Heart left ventricle (tissue), 16 donors: ENCODE measurements at regions of chr20 and their contacts with region 1.

Region 1: GRCh38 chr20:16801919-16802911 is 54.1 kb downstream of the OTOR start:
- DNase-seq: peak in 3 of 5 donors; percentile 12 to 36 (median 30)
- ATAC-seq: peak in 1 of 4 donors; percentile 49
- H3K4me3 ChIP-seq: no peak overlapping the region
- H3K27ac ChIP-seq: no peak overlapping the region
- H3K4me1 ChIP-seq: no peaks in the 10 kb centered on the region
- H3K27me3 ChIP-seq: peaks cover 0 to 79% (median 10%) of the 10 kb centered on the region in 9 donors
- CTCF ChIP-seq: peak; percentile 71 to 87 (median 78)
- POLR2A ChIP-seq: no peak

Region 2: GRCh38 chr20:16573001-16573965 is 228.9 kb before region 1 on chr20 and contains the start of gene KIF16B:
- intact Hi-C with region 1: no loop called
- DNase-seq: peak; percentile 92 to 96 (median 93)
- ATAC-seq: peak; percentile 89 to 98 (median 96)
- H3K4me3 ChIP-seq: peak within 1 kb of the TSS; percentile 63 to 99 (median 89)
- H3K27ac ChIP-seq: peak within 1 kb of the TSS in 11 of 12 donors; percentile 53 to 86 (median 78)
- H3K4me1 ChIP-seq: peaks cover 0 to 36% (median 22%) of the 10 kb centered on the region in 12 donors
- H3K27me3 ChIP-seq: no peaks in the 10 kb centered on the region
- CTCF ChIP-seq: peak in 2 of 12 donors; percentile 1 to 16
- POLR2A ChIP-seq: no peak
- total RNA-seq, gene KIF16B: 12.6 to 31.8 (median 17.8) TPM

Region 3: DNA sequence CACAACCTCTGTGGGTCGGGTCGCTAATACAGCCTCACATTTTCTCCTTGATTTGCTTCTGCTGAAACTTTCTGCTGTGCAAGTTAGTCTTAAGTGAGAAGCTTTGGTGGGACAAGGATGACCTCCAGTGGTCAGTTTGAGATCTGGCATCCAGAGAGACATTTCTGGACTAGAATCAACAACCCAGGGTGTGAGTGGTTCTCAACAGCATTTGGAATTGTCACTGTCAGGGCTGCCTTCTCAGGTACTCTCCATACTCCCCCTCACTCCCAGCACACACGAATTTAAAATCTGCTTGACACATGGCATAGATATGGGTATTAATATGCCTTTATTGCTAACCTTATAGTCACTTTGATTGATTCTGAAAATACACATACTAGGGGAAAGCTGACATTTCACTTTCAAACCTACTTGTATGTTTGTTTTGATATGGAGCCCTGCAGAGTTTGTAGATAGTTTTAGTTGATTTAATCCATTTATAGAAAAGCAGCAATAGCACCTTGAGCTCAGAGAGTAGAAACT is 40.8 kb before region 1 on chr20:
- intact Hi-C with region 1: no loop called
- DNase-seq: peak in 4 of 5 donors; percentile 26 to 38 (median 26)
- ATAC-seq: peak in 3 of 4 donors; percentile 76 to 78 (median 78)
- H3K4me3 ChIP-seq: no peak overlapping the region
- H3K27ac ChIP-seq: no peak overlapping the region
- H3K4me1 ChIP-seq: peaks cover 0 to 5% (median 0%) of the 10 kb centered on the region in 12 donors
- H3K27me3 ChIP-seq: peaks cover 0 to 14% (median 2%) of the 10 kb centered on the region in 9 donors
- CTCF ChIP-seq: peak; percentile 47 to 76 (median 68)
- POLR2A ChIP-seq: no peak

Region 4: DNA sequence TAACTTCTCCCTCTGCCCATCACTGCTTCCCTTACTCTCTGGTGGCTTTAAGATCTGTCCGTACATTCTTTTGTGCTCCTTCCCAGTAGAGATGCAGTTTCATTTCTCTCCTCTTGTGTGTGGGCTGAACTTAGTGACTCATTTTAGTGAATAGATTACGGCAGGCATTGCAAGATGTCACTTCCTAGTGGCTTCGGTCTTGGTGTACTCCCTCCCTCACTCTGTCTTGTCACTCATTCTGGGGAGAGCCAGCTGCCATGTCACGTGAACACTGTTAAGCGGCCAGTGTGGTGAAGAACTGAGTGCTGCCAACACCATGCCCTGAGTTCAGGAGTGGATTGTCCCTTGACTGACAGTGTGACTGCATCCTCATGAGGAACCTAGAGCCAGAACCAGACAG is 61.9 kb after region 1 on chr20:
- intact Hi-C with region 1: no loop called
- DNase-seq: peak in 1 of 5 donors; percentile 31
- ATAC-seq: peak in 1 of 4 donors; percentile 66
- H3K4me3 ChIP-seq: no peak overlapping the region
- H3K27ac ChIP-seq: no peak overlapping the region
- H3K4me1 ChIP-seq: no peaks in the 10 kb centered on the region
- H3K27me3 ChIP-seq: no peaks in the 10 kb centered on the region
- CTCF ChIP-seq: no peak
- POLR2A ChIP-seq: no peak

Region 5: DNA sequence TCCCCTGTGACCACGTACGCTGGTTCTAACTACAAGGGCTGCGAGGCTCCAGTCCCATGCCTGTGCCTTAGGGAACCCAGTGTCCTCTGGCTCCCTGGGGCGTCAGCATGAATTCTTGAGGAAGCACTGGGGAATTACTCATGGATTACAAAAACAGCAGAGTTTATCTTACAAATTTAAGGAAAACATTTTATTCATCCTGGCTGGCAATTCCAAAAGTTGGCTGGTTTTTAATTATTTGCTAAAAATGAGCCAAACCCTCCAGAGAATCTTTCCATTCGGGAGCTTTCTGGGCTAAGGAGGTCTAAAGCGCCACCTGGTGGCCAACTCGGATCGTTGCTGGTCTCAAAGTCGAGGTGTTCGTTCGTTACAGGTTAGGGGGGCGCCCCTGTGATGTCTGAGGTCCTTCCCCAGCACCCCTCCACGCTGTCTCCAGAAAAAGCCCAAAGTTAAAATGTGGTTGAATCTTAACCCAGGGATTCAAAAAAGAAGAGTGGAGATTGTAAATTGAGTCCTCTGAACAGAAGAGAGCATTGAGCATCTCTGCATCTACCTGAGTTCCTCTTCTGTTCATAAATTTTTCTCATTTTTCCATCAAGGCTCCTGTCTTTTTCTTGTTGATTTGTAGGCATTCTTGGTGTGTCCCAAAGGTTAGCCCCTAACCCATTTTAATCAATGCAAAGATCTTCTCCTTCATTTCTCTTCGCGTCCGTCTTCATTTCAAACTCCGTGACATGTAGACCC is 629.6 kb after region 1 on chr20:
- intact Hi-C with region 1: loop called (anchors 1 to 2 kb)
- DNase-seq: peak in 4 of 5 donors; percentile 16 to 40 (median 34)
- ATAC-seq: no peak
- H3K4me3 ChIP-seq: no peak overlapping the region
- H3K27ac ChIP-seq: no peak overlapping the region
- H3K4me1 ChIP-seq: peaks cover 0 to 5% (median 0%) of the 10 kb centered on the region in 12 donors
- H3K27me3 ChIP-seq: peaks cover 0 to 52% (median 15%) of the 10 kb centered on the region in 9 donors
- CTCF ChIP-seq: peak; percentile 62 to 93 (median 87)
- POLR2A ChIP-seq: no peak

Region 6: DNA sequence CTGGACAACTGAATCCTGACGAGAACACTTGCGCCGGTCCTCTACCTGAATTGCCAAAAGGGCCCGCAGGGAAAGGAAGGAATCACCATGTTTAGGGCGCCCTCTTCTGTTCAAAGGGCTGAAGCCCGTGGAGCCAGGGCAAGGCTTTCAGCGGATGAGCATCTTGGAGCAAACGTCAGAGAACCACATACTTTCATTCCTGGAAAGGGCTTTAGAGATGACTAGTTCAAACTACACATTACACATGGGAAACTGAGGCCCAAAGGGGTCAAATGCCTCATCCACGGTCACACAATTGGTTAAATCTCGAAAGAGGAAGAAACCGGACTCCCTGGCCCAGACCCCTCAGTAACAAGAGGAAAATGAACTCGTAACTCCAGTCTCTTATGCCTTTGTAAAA is 1474.6 kb after region 1 on chr20:
- intact Hi-C with region 1: loop called in 1 of 10 experiments (anchors 10 kb)
- DNase-seq: peak in 4 of 5 donors; percentile 34 to 54 (median 44)
- ATAC-seq: peak in 3 of 4 donors; percentile 53 to 82 (median 81)
- H3K4me3 ChIP-seq: no peak overlapping the region
- H3K27ac ChIP-seq: no peak overlapping the region
- H3K4me1 ChIP-seq: peaks cover 0 to 4% (median 0%) of the 10 kb centered on the region in 12 donors
- H3K27me3 ChIP-seq: peaks cover 0 to 43% (median 13%) of the 10 kb centered on the region in 9 donors
- CTCF ChIP-seq: peak; percentile 33 to 79 (median 64)
- POLR2A ChIP-seq: no peak

Region 7: GRCh38 chr20:18678549-18679419 is 1876.6 kb after region 1 on chr20:
- intact Hi-C with region 1: no loop called
- DNase-seq: no peak
- ATAC-seq: no peak
- H3K4me3 ChIP-seq: no peak overlapping the region
- H3K27ac ChIP-seq: no peak overlapping the region
- H3K4me1 ChIP-seq: no peaks in the 10 kb centered on the region
- H3K27me3 ChIP-seq: no peaks in the 10 kb centered on the region
- CTCF ChIP-seq: no peak
- POLR2A ChIP-seq: no peak